ENCODE measurements at regions of chr7 and their contacts with region 1.

Region 1: DNA sequence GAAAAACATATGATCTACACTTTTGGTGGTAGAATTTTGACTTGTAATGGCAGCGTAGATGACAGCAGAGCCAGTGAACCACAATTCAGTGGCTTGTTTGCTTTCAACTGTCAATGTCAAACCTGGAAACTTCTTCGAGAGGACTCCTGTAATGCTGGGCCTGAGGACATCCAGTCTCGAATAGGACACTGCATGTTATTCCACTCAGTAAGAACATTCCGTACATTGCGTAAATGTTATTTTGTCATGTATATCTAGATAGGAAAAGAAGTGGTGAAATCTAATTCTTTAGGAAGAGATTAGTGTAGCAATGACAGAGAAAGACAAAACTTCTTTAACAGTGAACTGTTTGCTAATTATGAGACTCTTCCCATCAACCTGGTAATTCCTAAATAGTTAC is 112.9 kb downstream of the PODXL start:
- DNase-seq: peak; percentile 47 to 63
- ATAC-seq: peak; percentile 94 to 98
- H3K4me3 ChIP-seq: no peak overlapping the region
- H3K27ac ChIP-seq: peak overlapping the region; percentile 69 to 82 (median 75)
- H3K4me1 ChIP-seq: peaks cover 14 to 21% of the 10 kb centered on the region in 2 donors
- H3K27me3 ChIP-seq: no peaks in the 10 kb centered on the region
- CTCF ChIP-seq: no peak
- POLR2A ChIP-seq: no peak

Region 2: GRCh38 chr7:131090886-131091692 is 352.4 kb before region 1 on chr7:
- in situ Hi-C with region 1: loop called in 1 of 4 experiments (anchors 25 kb)
- intact Hi-C with region 1: loop called (anchors 5 kb)
- DNase-seq: no peak
- ATAC-seq: peak in 1 of 2 donors; percentile 12
- H3K4me3 ChIP-seq: peak overlapping the region in 1 of 4 donors; percentile 12
- H3K27ac ChIP-seq: peak overlapping the region; percentile 62 to 80 (median 77)
- H3K4me1 ChIP-seq: peaks cover 87 to 88% of the 10 kb centered on the region in 2 donors
- H3K27me3 ChIP-seq: no peaks in the 10 kb centered on the region
- CTCF ChIP-seq: no peak
- POLR2A ChIP-seq: no peak

Region 3: DNA sequence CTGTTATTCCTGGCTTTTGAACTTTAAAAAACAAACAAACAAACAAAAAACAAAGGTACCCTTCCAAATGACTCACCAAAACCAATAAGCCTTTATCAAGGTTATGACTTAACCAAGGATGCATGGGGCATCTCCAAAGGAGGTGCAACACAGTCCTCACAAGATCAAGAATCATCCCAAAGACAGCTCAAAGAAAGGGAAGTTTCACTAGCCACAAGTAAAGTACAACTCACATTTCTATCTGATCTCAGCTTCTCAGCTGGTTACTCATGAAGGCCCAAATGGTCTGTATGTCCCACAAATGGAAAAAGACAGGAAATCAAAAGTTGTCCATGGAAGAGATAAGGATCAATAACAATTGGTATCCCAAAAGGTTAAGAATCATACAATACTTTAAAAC is 121.8 kb before region 1 on chr7:
- in situ Hi-C with region 1: no loop called
- intact Hi-C with region 1: no loop called
- DNase-seq: no peak
- ATAC-seq: no peak
- H3K4me3 ChIP-seq: no peak overlapping the region
- H3K27ac ChIP-seq: no peak overlapping the region
- H3K4me1 ChIP-seq: peaks cover 4 to 7% of the 10 kb centered on the region in 2 donors
- H3K27me3 ChIP-seq: no peaks in the 10 kb centered on the region
- CTCF ChIP-seq: no peak
- POLR2A ChIP-seq: no peak

Region 4: DNA sequence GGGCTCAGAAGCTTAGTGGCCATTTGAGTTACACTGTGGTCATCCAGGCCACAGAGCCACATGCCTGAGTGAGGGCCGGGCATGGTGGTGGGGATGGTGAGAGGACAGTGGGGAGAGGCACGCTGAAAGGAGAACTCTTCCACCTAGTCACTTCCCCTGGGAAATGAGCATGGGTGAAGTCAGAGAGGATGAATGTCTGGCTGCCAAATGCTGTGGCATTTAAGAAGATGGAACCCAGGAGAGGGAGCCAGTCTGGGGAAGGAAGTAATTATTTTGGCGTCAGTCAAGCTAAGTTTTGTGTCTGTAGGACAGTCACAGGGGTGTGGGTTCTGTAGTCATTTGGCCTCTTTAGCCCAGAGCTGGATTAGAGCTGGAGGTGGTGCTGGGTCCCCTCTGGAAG is 198.9 kb after region 1 on chr7:
- in situ Hi-C with region 1: no loop called
- intact Hi-C with region 1: no loop called
- DNase-seq: no peak
- ATAC-seq: no peak
- H3K4me3 ChIP-seq: no peak overlapping the region
- H3K27ac ChIP-seq: no peak overlapping the region
- H3K4me1 ChIP-seq: no peaks in the 10 kb centered on the region
- H3K27me3 ChIP-seq: no peaks in the 10 kb centered on the region
- CTCF ChIP-seq: no peak
- POLR2A ChIP-seq: no peak

Region 5: DNA sequence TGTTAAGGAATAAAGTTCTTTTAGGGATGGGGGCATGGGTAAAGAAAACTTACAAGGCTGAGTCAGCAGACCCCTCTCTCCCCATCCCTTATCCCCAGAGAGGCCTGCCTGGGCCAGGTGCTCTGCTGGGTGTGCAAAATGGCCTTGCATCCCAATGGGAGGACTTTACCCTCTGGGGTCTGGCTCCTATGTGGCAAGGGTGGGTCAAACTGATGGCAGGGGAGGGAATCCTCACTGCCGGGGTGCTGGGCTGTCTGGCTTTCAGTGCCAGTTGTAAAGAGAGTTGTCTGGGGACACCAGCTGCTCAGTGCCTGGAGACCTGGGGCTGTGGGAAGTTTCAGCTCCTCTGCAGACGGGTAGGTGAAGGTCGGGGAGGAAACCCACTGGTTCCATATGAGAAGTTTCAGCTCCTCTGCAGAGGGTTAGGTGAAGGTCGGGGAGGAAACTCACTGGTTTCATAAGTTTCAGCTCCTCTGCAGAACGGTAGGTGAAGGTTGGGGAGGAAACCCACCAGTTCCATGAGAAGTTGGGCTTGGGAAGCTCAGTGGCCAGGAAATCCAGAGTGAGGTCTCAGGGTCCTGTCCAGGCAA is 240.1 kb after region 1 on chr7:
- in situ Hi-C with region 1: no loop called
- intact Hi-C with region 1: no loop called
- DNase-seq: no peak
- ATAC-seq: no peak
- H3K4me3 ChIP-seq: no peak overlapping the region
- H3K27ac ChIP-seq: no peak overlapping the region
- H3K4me1 ChIP-seq: no peaks in the 10 kb centered on the region
- H3K27me3 ChIP-seq: peaks cover 0 to 5% (median 5%) of the 10 kb centered on the region in 3 donors
- CTCF ChIP-seq: no peak
- POLR2A ChIP-seq: no peak

Measured in gastrocnemius medialis (tissue), 4 donors.